Ovary (tissue), 10 donors: ENCODE measurements at regions of chr4 and their contacts with region 1.

Region 1: DNA sequence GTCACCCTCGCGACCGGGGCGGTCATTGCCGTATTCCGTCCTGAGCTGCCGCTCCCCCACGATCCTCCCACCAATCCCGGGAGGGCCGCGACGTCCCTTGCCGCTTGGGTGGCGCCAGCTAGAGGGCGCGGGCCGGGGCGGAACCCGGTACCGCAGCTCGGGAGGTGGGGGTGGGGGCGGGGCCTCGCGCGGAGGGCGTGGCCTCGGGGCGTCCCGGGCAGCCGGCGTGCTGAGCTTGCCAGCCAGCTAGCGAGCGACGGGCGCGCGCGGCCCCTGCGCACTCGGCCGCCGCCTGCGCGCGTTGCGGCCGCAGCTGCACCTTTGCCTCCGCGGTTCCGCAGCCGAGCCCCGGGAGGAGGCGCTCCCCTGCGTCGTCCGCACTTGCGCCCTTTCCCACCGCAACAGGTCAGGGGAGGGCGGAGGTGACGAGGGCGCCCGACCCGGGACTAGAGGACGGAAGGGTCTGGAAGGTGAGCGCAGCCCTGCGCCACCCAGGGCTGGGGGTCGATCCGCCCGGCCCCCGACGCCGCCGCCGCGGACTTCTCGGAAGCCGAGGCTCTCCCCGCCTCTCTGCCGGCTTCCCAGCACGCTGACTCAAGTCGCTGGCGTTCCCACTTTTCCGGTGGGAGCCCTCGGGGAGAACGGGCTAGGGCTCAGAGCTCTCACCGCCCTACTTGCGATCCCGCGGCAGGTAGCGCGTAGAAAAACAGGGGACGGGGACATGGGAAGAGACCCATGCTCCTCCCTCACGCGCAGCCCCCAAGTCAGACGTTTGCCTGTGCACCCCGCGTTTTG is at the start of gene AFF1:
- DNase-seq: peak; percentile 87 to 92 (median 88)
- H3K4me3 ChIP-seq: peak within 1 kb of the TSS; percentile 91
- H3K27ac ChIP-seq: peak within 1 kb of the TSS; percentile 59 to 82
- H3K4me1 ChIP-seq: peaks cover 2% of the 10 kb centered on the region
- H3K27me3 ChIP-seq: no peaks in the 10 kb centered on the region
- CTCF ChIP-seq: peak; percentile 34 to 54 (median 39)
- EP300 ChIP-seq: peak; percentile 47
- POLR2A ChIP-seq: peak; percentile 75
- total RNA-seq, gene AFF1: 56.8 to 107 (median 82.5) TPM

Region 2: DNA sequence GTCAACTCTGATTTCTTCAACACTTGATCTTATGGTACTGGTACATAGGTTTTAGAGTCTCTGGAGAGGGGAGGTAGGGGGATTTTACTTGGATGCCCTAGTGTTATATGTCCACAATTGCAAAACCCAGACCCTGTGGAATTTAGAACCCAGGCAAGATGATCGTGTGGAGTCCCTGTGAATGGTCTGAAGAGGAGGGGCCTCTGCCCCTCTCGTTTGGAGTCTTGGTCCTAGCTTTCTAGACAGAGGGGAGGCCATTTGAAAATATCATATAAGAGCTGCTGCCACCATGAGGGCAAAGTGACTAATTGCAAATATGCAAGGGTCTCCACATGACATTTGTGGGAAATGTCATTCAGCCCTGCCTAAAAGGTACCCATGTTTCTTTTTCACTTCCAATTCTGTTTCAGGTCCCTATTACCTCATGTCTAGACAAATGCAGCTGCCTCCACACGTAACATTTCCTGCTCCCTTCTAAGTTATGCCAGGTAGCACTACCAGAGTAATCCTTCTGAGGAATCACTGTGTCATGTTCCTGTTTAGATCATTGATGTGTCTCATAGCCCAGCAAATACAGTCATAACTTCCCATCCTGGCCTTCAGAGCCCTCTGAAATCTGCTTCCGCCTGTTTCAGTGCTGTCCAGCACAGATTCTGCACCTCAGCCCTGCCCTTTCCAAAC is 158.6 kb after region 1 on chr4:
- intact Hi-C with region 1: loop called in 1 of 4 experiments (anchors 10 kb)
- DNase-seq: peak in 2 of 5 donors; percentile 37
- H3K4me3 ChIP-seq: no peak overlapping the region
- H3K27ac ChIP-seq: peak overlapping the region in 1 of 2 donors; percentile 18
- H3K4me1 ChIP-seq: peaks cover 2% of the 10 kb centered on the region
- H3K27me3 ChIP-seq: no peaks in the 10 kb centered on the region
- CTCF ChIP-seq: peak; percentile 13 to 54 (median 52)
- EP300 ChIP-seq: no peak
- POLR2A ChIP-seq: no peak

Region 3: GRCh38 chr4:87220094-87220822 is 285.3 kb after region 1 on chr4 and contains the start of gene KLHL8:
- intact Hi-C with region 1: loop called in 1 of 4 experiments (anchors 10 kb)
- DNase-seq: peak; percentile 75 to 90 (median 80)
- H3K4me3 ChIP-seq: peak within 1 kb of the TSS; percentile 73
- H3K27ac ChIP-seq: peak within 1 kb of the TSS; percentile 86 to 88
- H3K4me1 ChIP-seq: no peaks in the 10 kb centered on the region
- H3K27me3 ChIP-seq: no peaks in the 10 kb centered on the region
- CTCF ChIP-seq: peak in 1 of 3 donors; percentile 1
- EP300 ChIP-seq: no peak
- POLR2A ChIP-seq: peak; percentile 69
- total RNA-seq, gene KLHL8: 9.4 to 13.1 (median 11.6) TPM